CD8-positive, alpha-beta T cell (primary cell): ENCODE measurements at regions of chr4 and their contacts with region 1.

Region 1: GRCh38 chr4:101693842-101694398 is 96.6 kb upstream of the BANK1 start:
- DNase-seq: no peak
- ATAC-seq: no peak
- H3K4me3 ChIP-seq: no peak overlapping the region
- H3K4me3 Mint-ChIP-seq: no peak overlapping the region
- H3K27ac ChIP-seq: no peak overlapping the region
- H3K27ac Mint-ChIP-seq: no peak overlapping the region
- H3K4me1 ChIP-seq: no peaks in the 10 kb centered on the region
- H3K4me1 Mint-ChIP-seq: no peaks in the 10 kb centered on the region
- H3K27me3 ChIP-seq: peaks cover 0 to 3% of the 10 kb centered on the region in 2 experiments
- H3K27me3 Mint-ChIP-seq: peaks cover 12% of the 10 kb centered on the region
- CTCF ChIP-seq: no peak

Region 2: DNA sequence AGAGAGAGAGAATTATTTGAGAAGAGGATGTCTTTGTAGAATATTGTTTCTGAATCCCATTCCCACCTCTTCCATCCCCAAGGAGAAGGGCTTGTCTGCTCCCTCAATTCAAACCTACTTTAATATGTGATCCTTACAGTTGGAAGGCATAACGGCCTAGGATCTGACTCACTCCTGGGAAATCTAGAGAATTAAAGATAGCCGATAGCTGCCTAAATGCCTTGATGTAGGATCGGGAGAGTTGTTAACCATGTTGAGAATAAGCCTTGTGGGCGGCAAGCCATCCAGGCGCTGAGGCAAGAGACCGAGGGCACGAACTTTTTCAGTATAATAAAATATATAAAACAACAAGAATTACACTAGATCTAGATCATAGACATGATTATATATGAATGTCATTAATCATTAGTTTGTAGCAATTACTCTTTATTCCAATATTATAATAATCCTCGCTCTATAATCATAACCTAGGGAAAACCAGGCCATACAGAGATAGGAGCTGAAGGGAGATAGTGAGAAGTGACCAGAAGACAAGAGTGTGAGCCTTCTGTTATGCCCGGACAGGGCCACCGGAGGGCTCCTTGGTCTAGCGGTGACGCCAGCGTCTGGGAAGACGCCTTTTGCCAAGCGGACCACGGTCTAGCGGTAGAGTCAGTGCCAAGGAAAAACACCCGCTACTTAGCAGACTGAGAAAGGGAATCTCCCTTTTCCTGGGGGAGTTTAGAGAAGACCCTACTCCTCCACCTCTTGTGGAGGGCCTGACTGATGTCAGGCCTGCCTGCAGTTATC is 1189.6 kb before region 1 on chr4:
- CTCF ChIA-PET with region 1: no interaction called
- POLR2A ChIA-PET with region 1: no interaction called
- intact Hi-C with region 1: loop called in 1 of 2 experiments (anchors 10 kb)
- DNase-seq: no peak
- ATAC-seq: no peak
- H3K4me3 ChIP-seq: no peak overlapping the region
- H3K4me3 Mint-ChIP-seq: no peak overlapping the region
- H3K27ac ChIP-seq: no peak overlapping the region
- H3K27ac Mint-ChIP-seq: no peak overlapping the region
- H3K4me1 ChIP-seq: no peaks in the 10 kb centered on the region
- H3K4me1 Mint-ChIP-seq: no peaks in the 10 kb centered on the region
- H3K27me3 ChIP-seq: no peaks in the 10 kb centered on the region
- H3K27me3 Mint-ChIP-seq: no peaks in the 10 kb centered on the region
- CTCF ChIP-seq: no peak

Region 3: DNA sequence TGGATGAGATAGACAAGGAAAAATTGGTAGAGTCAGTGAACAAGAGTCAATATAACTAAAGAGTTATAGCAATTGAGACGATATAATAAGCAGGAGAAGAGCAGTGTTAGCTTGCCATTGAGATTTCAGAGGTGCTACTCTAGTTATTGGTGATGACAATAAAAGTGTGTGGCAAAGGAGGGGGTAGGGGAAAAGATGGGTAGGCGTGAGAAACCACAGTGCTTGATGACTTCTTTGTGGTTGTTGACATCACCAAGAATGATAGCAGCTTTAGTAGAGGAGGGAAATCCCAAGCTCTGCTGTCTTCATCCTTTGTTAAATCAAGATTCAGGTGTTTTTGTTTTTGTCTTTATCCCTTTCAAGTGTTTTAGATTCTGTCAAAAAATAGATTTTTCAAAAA is 166.7 kb before region 1 on chr4:
- CTCF ChIA-PET with region 1: no interaction called
- POLR2A ChIA-PET with region 1: no interaction called
- intact Hi-C with region 1: no loop called
- DNase-seq: peak in 8 of 9 experiments; percentile 19 to 93 (median 54)
- ATAC-seq: peak; percentile 93
- H3K4me3 ChIP-seq: no peak overlapping the region
- H3K4me3 Mint-ChIP-seq: no peak overlapping the region
- H3K27ac ChIP-seq: no peak overlapping the region
- H3K27ac Mint-ChIP-seq: peak overlapping the region; percentile 28
- H3K4me1 ChIP-seq: peaks cover 16% of the 10 kb centered on the region
- H3K4me1 Mint-ChIP-seq: peaks cover 16% of the 10 kb centered on the region
- H3K27me3 ChIP-seq: peaks cover 0 to 7% of the 10 kb centered on the region in 2 experiments
- H3K27me3 Mint-ChIP-seq: peaks cover 29% of the 10 kb centered on the region
- CTCF ChIP-seq: no peak

Region 4: DNA sequence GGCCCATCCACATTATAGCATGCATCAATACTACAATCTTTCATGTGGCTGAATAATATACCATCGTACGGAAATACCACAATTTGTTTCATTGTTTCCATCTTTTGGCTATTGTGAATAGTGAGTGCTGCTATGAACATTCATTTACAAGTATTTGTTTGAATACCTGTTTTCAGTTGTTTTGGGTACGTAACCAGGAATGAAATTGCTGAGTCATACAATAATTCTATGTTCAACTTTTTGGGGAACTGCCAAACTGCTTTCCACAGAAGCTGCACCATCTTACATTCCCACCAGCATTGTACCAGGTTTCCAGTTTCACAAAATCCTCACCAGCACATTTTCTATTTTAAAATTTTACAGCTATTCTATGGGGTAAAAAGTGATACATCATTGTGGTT is 1095.4 kb after region 1 on chr4:
- CTCF ChIA-PET with region 1: no interaction called
- POLR2A ChIA-PET with region 1: no interaction called
- intact Hi-C with region 1: no loop called
- DNase-seq: no peak
- ATAC-seq: no peak
- H3K4me3 ChIP-seq: no peak overlapping the region
- H3K4me3 Mint-ChIP-seq: no peak overlapping the region
- H3K27ac ChIP-seq: no peak overlapping the region
- H3K27ac Mint-ChIP-seq: no peak overlapping the region
- H3K4me1 ChIP-seq: no peaks in the 10 kb centered on the region
- H3K4me1 Mint-ChIP-seq: peaks cover 16% of the 10 kb centered on the region
- H3K27me3 ChIP-seq: no peaks in the 10 kb centered on the region
- H3K27me3 Mint-ChIP-seq: no peaks in the 10 kb centered on the region
- CTCF ChIP-seq: no peak